Dendritic cell treated with granulocyte-macrophage colony-stimulating factor and Interleukin-4, amounts not matched to agents 40 ng/mL and 50 ng/mL, for 4 days (primary cell): ENCODE measurements at regions of chr9 and their contacts with region 1.

Region 1: DNA sequence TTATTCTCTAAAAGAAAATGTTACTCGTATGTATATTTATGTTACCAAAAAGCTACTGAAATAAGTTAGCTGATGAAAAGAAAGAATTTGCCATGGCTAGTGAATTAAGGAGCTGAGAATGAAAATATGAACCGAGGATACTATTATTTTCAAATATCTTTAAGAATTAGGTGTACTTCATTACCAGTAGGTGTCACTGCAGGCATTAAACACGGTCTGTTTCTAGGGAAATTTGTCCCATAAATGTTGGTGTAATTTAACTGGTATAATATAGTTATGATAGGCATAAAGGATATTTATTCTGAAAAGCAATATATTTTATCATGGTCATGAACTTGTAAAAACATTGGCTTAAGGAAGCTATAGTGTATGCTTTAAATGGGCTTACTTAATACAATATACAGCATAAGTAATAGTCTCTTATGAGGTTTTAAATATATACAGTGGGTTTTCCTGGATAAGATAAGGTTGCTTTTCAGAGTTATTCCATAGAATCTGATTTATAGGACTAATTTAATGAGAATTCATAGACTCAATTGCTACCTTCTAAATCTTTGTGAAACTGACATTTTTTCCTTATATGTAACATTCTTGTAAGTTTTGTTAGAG is 72.4 kb upstream of the MPDZ start:
- H3K4me3 Mint-ChIP-seq: no peak overlapping the region
- H3K27ac Mint-ChIP-seq: no peak overlapping the region
- H3K4me1 Mint-ChIP-seq: no peaks in the 10 kb centered on the region
- H3K27me3 Mint-ChIP-seq: no peaks in the 10 kb centered on the region

Region 2: DNA sequence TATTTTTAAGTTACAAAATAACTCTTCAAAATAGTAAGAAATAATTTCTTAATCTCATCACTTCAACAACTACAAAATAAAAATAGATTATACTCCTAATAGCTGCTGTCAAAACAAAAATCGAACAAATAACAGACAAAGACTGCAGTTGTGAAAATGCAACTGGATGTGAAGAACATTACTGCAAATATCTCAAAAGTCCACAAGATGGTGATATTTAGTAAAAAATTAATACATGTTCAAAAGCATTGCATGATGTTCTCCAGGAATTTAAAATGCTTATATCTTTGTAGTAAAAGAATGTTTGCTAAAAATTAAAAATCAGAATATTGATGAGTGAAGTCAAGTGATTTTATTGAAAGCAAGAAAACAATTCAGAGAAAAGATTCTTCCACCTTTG is 138.5 kb before region 1 on chr9:
- intact Hi-C with region 1: no loop called
- H3K4me3 Mint-ChIP-seq: no peak overlapping the region
- H3K27ac Mint-ChIP-seq: no peak overlapping the region
- H3K4me1 Mint-ChIP-seq: no peaks in the 10 kb centered on the region
- H3K27me3 Mint-ChIP-seq: no peaks in the 10 kb centered on the region

Region 3: GRCh38 chr9:13491493-13492424 is 139.9 kb after region 1 on chr9:
- intact Hi-C with region 1: no loop called
- H3K4me3 Mint-ChIP-seq: no peak overlapping the region
- H3K27ac Mint-ChIP-seq: no peak overlapping the region
- H3K4me1 Mint-ChIP-seq: no peaks in the 10 kb centered on the region
- H3K27me3 Mint-ChIP-seq: no peaks in the 10 kb centered on the region

Region 4: GRCh38 chr9:13787234-13787833 is 435.5 kb after region 1 on chr9:
- intact Hi-C with region 1: no loop called
- H3K4me3 Mint-ChIP-seq: no peak overlapping the region
- H3K27ac Mint-ChIP-seq: no peak overlapping the region
- H3K4me1 Mint-ChIP-seq: no peaks in the 10 kb centered on the region
- H3K27me3 Mint-ChIP-seq: no peaks in the 10 kb centered on the region

Region 5: GRCh38 chr9:14353222-14354056 is 1001.6 kb after region 1 on chr9:
- intact Hi-C with region 1: loop called (anchors 2 kb)
- H3K4me3 Mint-ChIP-seq: no peak overlapping the region
- H3K27ac Mint-ChIP-seq: no peak overlapping the region
- H3K4me1 Mint-ChIP-seq: peaks cover 5% of the 10 kb centered on the region
- H3K27me3 Mint-ChIP-seq: peaks cover 40% of the 10 kb centered on the region